Motor neuron (in vitro differentiated cells): ENCODE measurements at regions of chr5 and their contacts with region 1.

Region 1: DNA sequence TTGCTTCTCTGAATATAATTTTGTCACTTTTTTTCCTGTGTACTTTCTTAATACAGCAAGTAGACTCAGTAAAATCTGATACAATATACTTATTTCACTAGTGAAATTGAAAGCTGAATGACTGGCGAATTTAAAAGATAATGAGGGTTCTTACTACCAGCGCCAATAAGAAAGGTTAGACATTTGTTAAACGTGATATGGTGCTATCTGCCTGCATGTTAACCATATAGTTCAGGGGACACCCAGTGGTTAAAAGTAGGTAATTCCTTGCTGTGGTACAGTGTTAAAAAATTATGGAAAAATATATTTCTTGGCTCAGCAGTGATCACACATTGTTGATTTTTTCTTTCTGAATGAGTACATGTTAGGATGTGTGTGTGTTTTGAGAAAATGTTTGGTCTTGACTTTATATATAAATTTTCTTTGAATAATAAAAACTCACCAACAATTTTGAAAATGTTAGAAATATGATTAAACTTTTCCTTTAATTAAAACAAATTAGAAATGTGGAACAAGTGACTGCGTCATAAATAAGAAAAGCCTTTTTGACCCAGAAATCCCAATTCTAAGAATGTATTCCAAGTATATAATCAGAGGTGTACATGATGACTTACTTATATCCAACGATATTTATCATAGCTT is 25.8 kb downstream of the CAST start:
- ATAC-seq: peak; percentile 45 to 88 (median 60)
- H3K4me3 ChIP-seq: no peak overlapping the region
- H3K27ac ChIP-seq: no peak overlapping the region
- H3K4me1 ChIP-seq: no peaks in the 10 kb centered on the region

Region 2: GRCh38 chr5:96614110-96614691 is 73.7 kb before region 1 on chr5:
- in situ Hi-C with region 1: loop called in 1 of 9 experiments (anchors 10 kb)
- ATAC-seq: peak; percentile 83 to 95 (median 90)
- H3K4me3 ChIP-seq: no peak overlapping the region
- H3K27ac ChIP-seq: no peak overlapping the region
- H3K4me1 ChIP-seq: peaks cover 3 to 6% of the 10 kb centered on the region in 2 donors

Region 3: GRCh38 chr5:96781031-96781937 is 93.4 kb after region 1 on chr5:
- in situ Hi-C with region 1: no loop called
- ATAC-seq: peak in 1 of 8 experiments; percentile 13
- H3K4me3 ChIP-seq: no peak overlapping the region
- H3K27ac ChIP-seq: no peak overlapping the region
- H3K4me1 ChIP-seq: peaks cover 0 to 6% of the 10 kb centered on the region in 2 donors